Spleen (tissue), 13 donors: ENCODE measurements at regions of chr10 and their contacts with region 1.

Region 1: GRCh38 chr10:71888623-71889387 is 37.8 kb upstream of the PSAP start:
- DNase-seq: peak; percentile 96
- H3K4me3 ChIP-seq: peak overlapping the region; percentile 27 to 70 (median 44)
- H3K27ac ChIP-seq: peak overlapping the region in 7 of 8 donors; percentile 70 to 90 (median 80)
- H3K4me1 ChIP-seq: peaks cover 19 to 53% (median 33%) of the 10 kb centered on the region in 6 donors
- H3K27me3 ChIP-seq: no peaks in the 10 kb centered on the region
- CTCF ChIP-seq: peak in 1 of 11 experiments; percentile 14
- POLR2A ChIP-seq: no peak

Region 2: GRCh38 chr10:71835671-71836595 is 52.9 kb before region 1 on chr10:
- intact Hi-C with region 1: loop called (anchors 10 kb)
- DNase-seq: peak; percentile 90
- H3K4me3 ChIP-seq: peak overlapping the region in 1 of 8 donors; percentile 42
- H3K27ac ChIP-seq: peak overlapping the region; percentile 20 to 85 (median 76)
- H3K4me1 ChIP-seq: peaks cover 56 to 100% (median 94%) of the 10 kb centered on the region in 6 donors
- H3K27me3 ChIP-seq: no peaks in the 10 kb centered on the region
- CTCF ChIP-seq: no peak
- POLR2A ChIP-seq: no peak